PC-9 (cell line): ENCODE measurements at regions of chr17 and their contacts with region 1.

Region 1: GRCh38 chr17:16438557-16439302 is 23.4 kb downstream of the TRPV2 start:
- DNase-seq: peak; percentile 94 to 99
- H3K4me3 ChIP-seq: peak overlapping the region; percentile 98
- H3K27ac ChIP-seq: peak overlapping the region; percentile 88
- H3K4me1 ChIP-seq: peaks cover 20% of the 10 kb centered on the region
- H3K27me3 ChIP-seq: no peaks in the 10 kb centered on the region
- CTCF ChIP-seq: no peak

Region 2: DNA sequence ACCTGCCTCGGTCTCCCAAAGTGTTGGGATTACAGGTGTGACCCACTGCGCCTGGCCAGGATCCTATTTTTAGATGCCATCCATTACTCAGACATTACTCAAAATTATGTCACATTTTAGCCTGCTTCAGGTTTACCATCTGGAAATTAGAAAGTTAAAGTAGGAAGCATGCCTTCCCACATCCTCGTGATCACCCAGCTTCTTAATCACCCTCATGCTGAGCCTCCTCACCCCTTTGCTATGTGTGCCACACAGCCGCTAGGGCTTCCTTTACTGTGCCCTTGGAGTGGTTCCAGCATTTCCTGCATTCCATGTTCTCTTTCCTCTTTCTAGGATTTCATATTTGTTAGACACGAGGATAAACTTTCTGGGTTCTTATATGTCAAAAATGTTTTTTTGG is 484.5 kb before region 1 on chr17:
- CTCF ChIA-PET with region 1: no interaction called
- POLR2A ChIA-PET with region 1: interaction called, 17 read pairs
- intact Hi-C with region 1: no loop called
- DNase-seq: peak; percentile 81 to 91
- H3K4me3 ChIP-seq: no peak overlapping the region
- H3K27ac ChIP-seq: peak overlapping the region; percentile 71
- H3K4me1 ChIP-seq: peaks cover 48% of the 10 kb centered on the region
- H3K27me3 ChIP-seq: no peaks in the 10 kb centered on the region
- CTCF ChIP-seq: no peak

Region 3: GRCh38 chr17:16215273-16215964 is 223.3 kb before region 1 on chr17 and contains the start of gene NCOR1:
- CTCF ChIA-PET with region 1: no interaction called
- POLR2A ChIA-PET with region 1: interaction called, 10 read pairs
- intact Hi-C with region 1: loop called (anchors 5 kb)
- DNase-seq: peak; percentile 73 to 93
- H3K4me3 ChIP-seq: peak within 1 kb of the TSS; percentile 92
- H3K27ac ChIP-seq: peak within 1 kb of the TSS; percentile 90
- H3K4me1 ChIP-seq: peaks cover 23% of the 10 kb centered on the region
- H3K27me3 ChIP-seq: no peaks in the 10 kb centered on the region
- CTCF ChIP-seq: no peak; the same call in 1 of the 2 replicates
- total RNA-seq, gene NCOR1: 139 and 171 TPM in 2 replicates

Region 4: DNA sequence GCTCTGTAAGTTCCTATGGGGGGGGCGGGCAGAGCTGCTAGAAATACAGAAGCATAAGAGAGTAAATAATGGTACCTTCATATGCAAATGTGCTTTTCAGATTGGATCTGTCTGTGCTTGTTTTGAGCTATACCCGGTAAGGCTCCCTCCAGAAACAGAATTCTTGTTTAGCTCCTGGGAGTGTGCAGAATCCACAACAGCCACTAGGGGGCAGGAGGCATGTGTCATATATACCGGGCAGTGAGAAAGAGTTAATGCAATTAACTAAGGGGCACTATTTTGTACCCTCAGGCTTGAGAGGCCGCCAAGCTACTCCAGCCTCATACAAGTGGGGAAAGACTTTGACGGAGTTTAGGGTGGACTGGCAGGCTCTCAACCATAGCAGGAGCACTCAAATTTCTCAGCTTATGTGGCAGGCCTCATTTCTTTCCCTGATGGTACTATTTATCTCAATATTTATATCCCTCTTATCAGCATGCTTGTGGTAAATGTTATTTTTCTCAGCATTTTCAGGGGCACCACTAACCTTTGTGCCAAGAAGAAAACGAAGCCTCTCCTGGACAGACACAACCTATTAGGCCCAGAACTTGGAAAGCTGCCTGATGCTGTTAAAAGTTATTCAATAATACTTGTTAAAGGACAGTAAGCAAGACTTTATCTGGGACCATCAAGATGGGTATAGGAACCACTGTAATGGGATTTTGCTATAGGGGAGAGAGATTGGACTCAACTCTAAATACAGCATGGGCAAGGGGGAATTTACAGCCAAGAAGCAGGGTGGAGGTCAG is 74.8 kb before region 1 on chr17:
- CTCF ChIA-PET with region 1: interaction called, 11 read pairs
- POLR2A ChIA-PET with region 1: interaction called, 4 read pairs
- intact Hi-C with region 1: no loop called
- DNase-seq: peak in 1 of 2 experiments; percentile 73
- H3K4me3 ChIP-seq: no peak overlapping the region
- H3K27ac ChIP-seq: no peak overlapping the region
- H3K4me1 ChIP-seq: no peaks in the 10 kb centered on the region
- H3K27me3 ChIP-seq: no peaks in the 10 kb centered on the region
- CTCF ChIP-seq: peak; percentile 90

Region 5: GRCh38 chr17:16371742-16372141 is 67.0 kb before region 1 on chr17:
- CTCF ChIA-PET with region 1: no interaction called
- POLR2A ChIA-PET with region 1: interaction called, 10 read pairs
- intact Hi-C with region 1: no loop called
- DNase-seq: no peak
- H3K4me3 ChIP-seq: no peak overlapping the region
- H3K27ac ChIP-seq: no peak overlapping the region
- H3K4me1 ChIP-seq: no peaks in the 10 kb centered on the region
- H3K27me3 ChIP-seq: no peaks in the 10 kb centered on the region
- CTCF ChIP-seq: no peak

Region 6: GRCh38 chr17:16419074-16419928 is 19.4 kb before region 1 on chr17:
- CTCF ChIA-PET with region 1: interaction called, 3 read pairs
- POLR2A ChIA-PET with region 1: interaction called, 3 read pairs
- intact Hi-C with region 1: loop called (anchors 2 kb)
- DNase-seq: peak; percentile 66 to 81
- H3K4me3 ChIP-seq: peak overlapping the region; percentile 22; the same call in 1 of the 2 replicates
- H3K27ac ChIP-seq: peak overlapping the region; percentile 71
- H3K4me1 ChIP-seq: peaks cover 38% of the 10 kb centered on the region
- H3K27me3 ChIP-seq: no peaks in the 10 kb centered on the region
- CTCF ChIP-seq: no peak

Region 7: DNA sequence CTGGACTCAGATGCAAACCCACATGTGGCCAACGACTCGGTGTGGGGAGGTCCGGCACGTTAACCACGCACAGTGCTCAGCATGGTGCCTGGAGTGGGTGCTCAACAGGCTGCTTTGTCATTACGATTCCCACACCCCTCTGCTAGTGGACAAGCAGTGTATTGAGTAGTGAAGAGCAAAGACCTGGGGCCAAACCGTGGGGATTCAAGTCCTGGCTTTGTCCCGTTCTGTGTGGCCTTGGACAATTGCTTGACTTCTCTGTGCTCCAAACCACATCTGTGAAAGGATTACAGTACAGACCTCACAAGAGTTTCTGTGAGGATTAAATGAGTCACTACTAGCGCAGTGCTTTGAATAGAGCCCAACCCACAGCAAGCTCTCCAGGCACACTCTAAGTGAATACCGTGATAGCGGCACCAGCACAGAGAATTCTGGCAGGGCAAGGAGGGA is 10.4 kb after region 1 on chr17:
- CTCF ChIA-PET with region 1: interaction called, 19 read pairs
- POLR2A ChIA-PET with region 1: no interaction called
- intact Hi-C with region 1: no loop called
- DNase-seq: no peak
- H3K4me3 ChIP-seq: no peak overlapping the region
- H3K27ac ChIP-seq: no peak overlapping the region
- H3K4me1 ChIP-seq: no peaks in the 10 kb centered on the region
- H3K27me3 ChIP-seq: no peaks in the 10 kb centered on the region
- CTCF ChIP-seq: no peak

Region 8: DNA sequence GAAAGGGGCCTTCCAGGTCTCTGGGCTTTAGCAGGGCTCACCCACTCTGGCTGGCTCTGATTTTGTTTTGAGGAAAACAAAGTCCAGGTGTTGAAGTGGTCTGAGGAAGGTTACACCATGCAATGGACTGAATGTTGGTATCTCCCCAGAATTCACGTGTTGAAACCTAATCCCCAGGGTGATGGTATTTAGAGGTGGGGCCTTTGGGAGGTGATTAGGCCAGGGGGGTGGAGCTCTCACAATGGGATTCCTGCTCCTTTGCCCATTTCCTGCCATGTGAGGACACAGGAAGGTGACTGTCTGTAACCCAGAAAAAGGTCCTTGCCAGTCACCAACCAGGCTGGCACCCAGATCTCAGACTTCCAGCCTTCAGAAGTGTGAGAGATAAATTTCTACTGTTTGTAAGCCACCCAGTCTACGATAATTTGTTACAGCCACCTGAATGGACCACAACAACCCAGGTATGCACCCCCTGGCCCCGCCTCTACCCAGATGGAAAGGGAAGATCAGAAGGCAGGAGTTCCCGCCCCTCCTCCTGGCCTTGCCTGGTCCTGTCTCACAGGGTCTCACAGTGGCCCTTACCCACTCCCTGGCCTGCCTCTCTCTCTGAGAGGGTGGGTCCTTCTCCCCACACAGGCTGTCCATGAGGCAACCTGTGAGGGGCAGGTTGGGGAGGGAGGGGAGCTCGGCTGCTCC is 21.3 kb after region 1 on chr17:
- CTCF ChIA-PET with region 1: no interaction called
- POLR2A ChIA-PET with region 1: no interaction called
- intact Hi-C with region 1: no loop called
- DNase-seq: peak in 1 of 2 experiments; percentile 78
- H3K4me3 ChIP-seq: no peak overlapping the region
- H3K27ac ChIP-seq: 0 out of 2 replicates have a peak overlapping the region, but pooled peaks have one; percentile 32
- H3K4me1 ChIP-seq: peaks cover 10% of the 10 kb centered on the region
- H3K27me3 ChIP-seq: no peaks in the 10 kb centered on the region
- CTCF ChIP-seq: no peak